ENCODE measurements at regions of chr14 and their contacts with region 1.

Region 1: DNA sequence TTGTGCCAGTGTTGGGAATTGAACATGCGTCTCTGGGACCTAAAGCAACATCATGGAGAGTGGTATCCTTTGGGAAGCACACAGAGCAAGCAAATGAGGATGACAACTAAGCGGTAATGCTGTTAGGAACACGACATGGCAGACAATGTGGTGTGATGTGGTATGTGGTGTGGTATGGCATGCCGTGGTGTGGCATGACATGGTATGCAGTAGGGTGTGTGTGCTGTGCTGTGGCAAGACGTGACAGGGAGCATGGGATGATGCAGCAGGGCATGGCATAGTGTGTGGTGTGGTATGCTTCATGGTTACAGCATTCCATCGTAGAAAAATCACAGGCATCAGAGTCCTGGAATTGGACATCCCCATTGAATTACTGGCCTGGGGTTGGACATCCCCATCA is 108.7 kb downstream of the RTN1 start:
- DNase-seq: no peak

Region 2: DNA sequence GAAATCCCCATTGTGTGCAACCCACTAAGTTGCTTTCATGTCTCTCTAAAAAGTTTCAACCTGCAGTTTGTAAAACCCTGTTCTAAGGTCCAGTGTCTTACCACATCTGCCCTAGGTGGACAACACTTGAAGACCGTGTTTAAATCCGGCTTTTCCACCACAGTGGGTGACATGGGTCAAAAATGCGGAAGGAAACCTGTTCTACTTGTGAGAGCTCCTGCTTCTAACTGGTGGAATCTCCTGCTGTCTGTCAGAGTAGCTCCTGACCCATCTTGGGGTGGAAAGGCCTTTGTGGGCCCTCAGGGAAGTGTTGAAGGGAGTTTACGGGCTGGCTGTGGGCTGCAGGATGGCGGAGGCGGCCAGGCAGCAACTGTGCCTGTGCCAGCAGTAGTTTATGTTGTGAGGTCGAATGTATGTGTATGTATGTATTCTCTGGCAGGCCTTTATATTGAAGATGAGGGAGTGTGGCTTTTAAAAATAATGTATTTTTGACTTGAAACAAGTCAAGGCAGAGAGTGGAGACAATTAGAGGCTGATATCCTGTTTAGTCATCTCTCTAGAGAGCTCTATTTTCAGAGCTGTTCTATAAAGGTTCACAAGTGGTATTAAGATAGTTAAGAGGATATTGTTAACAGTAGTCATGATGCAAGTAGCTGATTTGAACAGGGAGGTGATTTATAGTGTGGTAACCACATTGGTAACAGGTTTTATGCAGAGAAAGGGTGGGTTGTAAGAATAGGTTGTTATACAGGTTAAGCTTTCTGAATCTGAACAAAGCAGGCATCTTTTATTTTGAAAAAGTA is 1626.5 kb after region 1 on chr14:
- intact Hi-C with region 1: loop called in 1 of 2 experiments (anchors 5 kb)
- DNase-seq: no peak